ENCODE measurements at regions of chr6 and their contacts with region 1.

Region 1: GRCh38 chr6:142746524-142746923 is 198.5 kb downstream of the HIVEP2 start:
- DNase-seq: peak; percentile 62 to 73 (median 69)
- H3K4me3 ChIP-seq: no peak overlapping the region
- H3K27ac ChIP-seq: no peak overlapping the region
- H3K4me1 ChIP-seq: no peaks in the 10 kb centered on the region
- H3K27me3 ChIP-seq: no peaks in the 10 kb centered on the region

Region 2: DNA sequence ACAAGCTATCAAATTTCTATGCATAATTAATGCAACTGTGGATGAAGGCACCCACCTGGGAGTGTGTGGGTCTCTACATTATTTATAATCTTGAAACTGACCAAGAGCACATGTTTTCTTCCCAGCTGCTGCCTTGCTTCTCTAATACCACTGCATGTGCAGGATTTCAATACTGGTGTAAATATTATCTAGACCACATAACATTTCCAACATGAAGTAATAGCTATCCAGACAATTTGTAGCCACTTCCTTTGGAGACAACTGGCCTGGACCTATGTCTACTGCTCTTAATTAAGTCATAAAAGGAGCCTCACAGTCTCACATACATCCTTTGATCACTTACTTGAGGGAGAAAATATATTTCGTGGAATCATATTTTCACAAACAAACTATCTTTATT is 17.8 kb after region 1 on chr6:
- CTCF ChIA-PET with region 1: interaction called, 10 read pairs
- POLR2A ChIA-PET with region 1: no interaction called
- DNase-seq: no peak
- H3K4me3 ChIP-seq: no peak overlapping the region
- H3K27ac ChIP-seq: no peak overlapping the region
- H3K4me1 ChIP-seq: no peaks in the 10 kb centered on the region
- H3K27me3 ChIP-seq: no peaks in the 10 kb centered on the region